ENCODE measurements at regions of chr6 and their contacts with region 1.

Region 1: GRCh38 chr6:37819177-37819823 is at the start of gene ZFAND3:
- DNase-seq: peak; percentile 95
- ATAC-seq: peak; percentile 83
- H3K4me3 ChIP-seq: peak within 1 kb of the TSS; percentile 86 to 93 (median 90)
- H3K27ac ChIP-seq: peak within 1 kb of the TSS; percentile 98
- H3K4me1 ChIP-seq: peaks cover 66% of the 10 kb centered on the region
- H3K27me3 ChIP-seq: no peaks in the 10 kb centered on the region; a peak in 1 of 5 replicates
- CTCF ChIP-seq: no peak
- EP300 ChIP-seq: peak in 1 of 2 experiments; percentile 10; a peak in 1 of 4 replicates
- POLR2A ChIP-seq: peak; percentile 69 to 87
- RAD21 ChIP-seq: peak; percentile 35; the same call in 1 of the 2 replicates
- total RNA-seq, gene ZFAND3: 16.4 and 18.9 TPM in 2 replicates

Region 2: DNA sequence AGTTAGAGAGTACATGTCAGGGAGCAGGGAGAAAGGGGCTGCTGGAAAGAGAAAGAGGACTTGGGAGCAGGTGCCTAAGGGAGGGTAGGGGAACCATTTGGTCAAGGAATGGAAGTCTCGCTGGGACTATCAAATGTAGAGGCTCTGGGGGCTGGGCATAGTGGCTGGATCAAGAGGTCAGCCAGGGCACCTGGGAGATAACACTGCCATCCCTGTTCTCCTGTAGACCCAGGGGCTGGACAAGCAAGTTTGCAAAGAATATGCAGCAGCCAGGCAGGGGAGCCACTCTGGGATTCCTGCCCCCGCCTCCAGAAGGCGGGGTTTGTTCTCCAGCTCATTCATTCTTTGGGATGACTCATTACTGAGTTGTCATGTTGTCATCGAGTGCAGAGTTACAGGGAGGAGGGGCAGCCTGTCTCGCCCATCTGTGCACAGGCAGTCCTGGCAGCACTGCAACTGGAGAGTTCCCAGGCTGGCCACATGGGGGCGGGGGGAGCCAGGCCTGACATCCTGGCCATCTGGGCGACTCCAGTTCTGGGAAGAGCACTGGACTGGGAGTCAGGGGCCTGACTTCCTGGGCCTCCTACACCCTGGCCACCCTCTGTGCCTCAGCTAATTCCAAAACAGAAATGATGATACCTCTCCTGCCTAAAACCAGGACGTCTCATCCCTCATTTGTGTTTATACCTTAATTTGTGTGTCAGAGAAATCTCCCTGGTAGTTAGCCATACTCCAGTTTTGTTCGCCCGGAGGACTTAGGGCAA is 28.0 kb before region 1 on chr6:
- CTCF ChIA-PET with region 1: no interaction called
- POLR2A ChIA-PET with region 1: interaction called, 13 read pairs
- in situ Hi-C with region 1: no loop called
- intact Hi-C with region 1: no loop called
- DNase-seq: peak; percentile 98
- ATAC-seq: peak; percentile 95
- H3K4me3 ChIP-seq: peak overlapping the region in 2 of 3 experiments; percentile 26 to 55; a peak in 4 of 6 replicates
- H3K27ac ChIP-seq: no peak overlapping the region
- H3K4me1 ChIP-seq: peaks cover 64% of the 10 kb centered on the region
- H3K27me3 ChIP-seq: no peaks in the 10 kb centered on the region
- CTCF ChIP-seq: peak; percentile 99
- EP300 ChIP-seq: peak in 1 of 2 experiments; percentile 78; a peak in 2 of 4 replicates
- POLR2A ChIP-seq: no peak
- RAD21 ChIP-seq: peak; percentile 99

Region 3: DNA sequence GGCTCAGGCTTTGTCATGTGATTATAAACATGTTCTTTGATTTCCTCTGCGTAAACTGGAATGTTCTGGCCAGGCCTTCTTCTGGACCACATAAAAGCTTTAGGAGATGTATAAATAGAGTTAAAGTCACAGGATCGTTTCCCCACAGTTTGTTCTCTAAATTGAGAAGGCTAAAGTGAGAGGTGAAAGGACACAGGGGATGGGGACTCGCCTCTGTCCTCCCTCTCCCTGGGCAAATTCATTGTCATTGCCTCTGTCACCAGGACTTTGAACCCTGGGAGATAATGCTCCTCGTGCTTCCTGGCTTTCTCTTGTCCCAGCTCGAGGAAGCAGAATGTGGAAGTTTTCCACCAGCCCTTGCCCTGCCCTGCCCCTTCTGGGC is 20.0 kb before region 1 on chr6:
- CTCF ChIA-PET with region 1: no interaction called
- POLR2A ChIA-PET with region 1: interaction called, 73 read pairs
- in situ Hi-C with region 1: no loop called
- intact Hi-C with region 1: loop called (anchors 1 kb)
- DNase-seq: peak; percentile 95
- ATAC-seq: peak; percentile 77
- H3K4me3 ChIP-seq: peak overlapping the region; percentile 6 to 44 (median 39); a peak in 5 of 6 replicates
- H3K27ac ChIP-seq: peak overlapping the region; percentile 16
- H3K4me1 ChIP-seq: peaks cover 77% of the 10 kb centered on the region
- H3K27me3 ChIP-seq: no peaks in the 10 kb centered on the region
- CTCF ChIP-seq: 0 out of 2 replicates have a peak, but pooled peaks have one; percentile 29
- EP300 ChIP-seq: peak in 1 of 2 experiments; percentile 83; a peak in 2 of 4 replicates
- POLR2A ChIP-seq: peak in 1 of 2 experiments; percentile 53; a peak in 1 of 4 replicates
- RAD21 ChIP-seq: 0 out of 2 replicates have a peak, but pooled peaks have one; percentile 24

Region 4: GRCh38 chr6:37807656-37808055 is 11.6 kb before region 1 on chr6:
- CTCF ChIA-PET with region 1: no interaction called
- POLR2A ChIA-PET with region 1: interaction called, 52 read pairs
- in situ Hi-C with region 1: no loop called
- intact Hi-C with region 1: no loop called
- DNase-seq: no peak
- ATAC-seq: peak; percentile 42
- H3K4me3 ChIP-seq: no peak overlapping the region
- H3K27ac ChIP-seq: no peak overlapping the region
- H3K4me1 ChIP-seq: peaks cover 11% of the 10 kb centered on the region
- H3K27me3 ChIP-seq: 0 out of 5 replicates have a peak, but pooled peaks cover 0 to 5% of the 10 kb centered on the region in 2 experiments
- CTCF ChIP-seq: no peak
- EP300 ChIP-seq: no peak
- POLR2A ChIP-seq: no peak
- RAD21 ChIP-seq: no peak

Region 5: GRCh38 chr6:37845026-37845911 is 26.0 kb after region 1 on chr6:
- CTCF ChIA-PET with region 1: no interaction called
- POLR2A ChIA-PET with region 1: interaction called, 60 read pairs
- in situ Hi-C with region 1: no loop called
- intact Hi-C with region 1: no loop called
- DNase-seq: no peak
- ATAC-seq: peak; percentile 68
- H3K4me3 ChIP-seq: no peak overlapping the region
- H3K27ac ChIP-seq: peak overlapping the region; percentile 22
- H3K4me1 ChIP-seq: peaks cover 46% of the 10 kb centered on the region
- H3K27me3 ChIP-seq: no peaks in the 10 kb centered on the region
- CTCF ChIP-seq: no peak
- EP300 ChIP-seq: no peak
- POLR2A ChIP-seq: no peak
- RAD21 ChIP-seq: no peak

Region 6: DNA sequence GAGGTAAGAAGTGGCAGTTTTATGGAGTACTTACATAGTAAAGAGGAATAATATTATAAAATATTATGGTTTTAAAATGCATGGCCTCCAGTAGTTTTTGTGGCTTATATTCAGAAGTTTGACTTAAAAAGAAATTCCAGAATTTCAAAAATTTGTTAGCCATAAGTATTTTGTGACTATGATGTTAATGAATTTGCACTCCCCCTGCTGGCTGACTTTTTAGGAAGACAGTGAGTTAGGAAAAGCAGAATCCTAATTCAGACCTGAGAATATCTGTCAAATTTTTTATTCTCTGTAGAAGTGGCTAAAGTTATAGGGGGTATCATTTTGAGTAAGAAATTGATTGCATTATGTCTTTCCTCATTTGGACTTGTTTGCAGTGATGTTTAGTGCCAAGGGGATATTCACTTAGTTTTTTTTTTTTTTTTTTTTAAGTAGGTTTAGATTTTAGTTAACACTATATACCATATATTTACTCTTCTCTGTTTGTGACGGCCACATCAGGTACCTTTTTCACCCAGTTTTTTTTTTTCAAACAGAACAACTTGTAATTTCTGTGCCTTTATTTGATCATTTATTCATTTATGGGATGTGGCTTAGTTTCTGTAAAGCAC is 41.0 kb after region 1 on chr6:
- CTCF ChIA-PET with region 1: no interaction called
- POLR2A ChIA-PET with region 1: interaction called, 13 read pairs
- in situ Hi-C with region 1: no loop called
- intact Hi-C with region 1: loop called (anchors 2 kb)
- DNase-seq: peak; percentile 53
- ATAC-seq: peak; percentile 35; the same call in 1 of the 3 replicates
- H3K4me3 ChIP-seq: no peak overlapping the region
- H3K27ac ChIP-seq: no peak overlapping the region
- H3K4me1 ChIP-seq: peaks cover 11% of the 10 kb centered on the region; the same call in 1 of the 2 replicates
- H3K27me3 ChIP-seq: no peaks in the 10 kb centered on the region
- CTCF ChIP-seq: peak; percentile 48
- EP300 ChIP-seq: no peak
- POLR2A ChIP-seq: no peak
- RAD21 ChIP-seq: peak; percentile 40; the same call in 1 of the 2 replicates

Region 7: DNA sequence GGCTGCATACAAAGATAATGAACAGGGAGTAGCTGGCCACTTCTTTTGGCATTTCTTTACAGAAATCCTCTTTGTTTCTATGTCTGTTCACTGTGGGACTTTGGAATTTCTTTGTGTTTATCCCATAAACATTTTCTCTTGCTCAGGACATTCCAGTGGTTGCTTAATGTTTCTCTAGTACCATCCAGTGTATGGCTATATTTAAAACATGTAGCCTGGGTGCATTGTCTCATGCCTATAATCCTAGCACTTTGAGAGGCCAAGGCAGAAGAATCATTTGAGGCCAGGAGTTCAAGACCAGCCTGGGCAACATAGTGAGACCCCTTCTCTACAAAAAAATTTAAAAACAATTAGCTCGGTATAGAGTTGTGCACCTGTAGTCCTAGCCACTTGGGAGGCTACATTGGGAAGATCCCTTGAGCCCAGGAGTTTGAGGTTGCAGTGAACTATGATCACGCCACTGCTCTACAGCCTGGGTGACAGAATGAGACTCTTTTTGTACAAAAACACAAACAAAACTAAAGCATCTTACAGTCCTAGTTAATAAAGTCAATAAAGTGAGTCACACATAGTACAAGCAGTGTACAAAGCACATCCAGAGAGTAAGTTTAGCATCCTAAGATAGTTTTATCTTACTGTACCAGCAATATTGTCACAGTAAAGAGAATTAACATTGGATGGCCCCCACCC is 63.6 kb after region 1 on chr6:
- CTCF ChIA-PET with region 1: no interaction called
- POLR2A ChIA-PET with region 1: interaction called, 11 read pairs
- in situ Hi-C with region 1: no loop called
- intact Hi-C with region 1: no loop called
- DNase-seq: peak; percentile 84
- ATAC-seq: peak; percentile 89
- H3K4me3 ChIP-seq: no peak overlapping the region
- H3K27ac ChIP-seq: peak overlapping the region; percentile 46
- H3K4me1 ChIP-seq: peaks cover 56% of the 10 kb centered on the region
- H3K27me3 ChIP-seq: no peaks in the 10 kb centered on the region
- CTCF ChIP-seq: no peak
- EP300 ChIP-seq: no peak
- POLR2A ChIP-seq: no peak
- RAD21 ChIP-seq: no peak

Region 8: GRCh38 chr6:38001386-38001785 is 182.1 kb after region 1 on chr6:
- CTCF ChIA-PET with region 1: no interaction called
- POLR2A ChIA-PET with region 1: no interaction called
- in situ Hi-C with region 1: no loop called
- intact Hi-C with region 1: no loop called
- DNase-seq: no peak
- ATAC-seq: no peak
- H3K4me3 ChIP-seq: no peak overlapping the region
- H3K27ac ChIP-seq: no peak overlapping the region
- H3K4me1 ChIP-seq: no peaks in the 10 kb centered on the region
- H3K27me3 ChIP-seq: no peaks in the 10 kb centered on the region
- CTCF ChIP-seq: no peak
- EP300 ChIP-seq: no peak
- POLR2A ChIP-seq: no peak
- RAD21 ChIP-seq: no peak